CD4-positive, alpha-beta memory T cell (primary cell): ENCODE measurements at regions of chr2 and their contacts with region 1.

Region 1: GRCh38 chr2:31333527-31334183 is 80.9 kb downstream of the XDH start:
- DNase-seq: peak; percentile 71 to 76 (median 75)
- H3K4me3 ChIP-seq: no peak overlapping the region
- H3K4me3 Mint-ChIP-seq: no peak overlapping the region
- H3K27ac ChIP-seq: no peak overlapping the region
- H3K27ac Mint-ChIP-seq: peak overlapping the region in 2 of 7 donors; percentile 20 to 48
- H3K4me1 ChIP-seq: no peaks in the 10 kb centered on the region
- H3K4me1 Mint-ChIP-seq: no peaks in the 10 kb centered on the region
- H3K27me3 ChIP-seq: no peaks in the 10 kb centered on the region
- H3K27me3 Mint-ChIP-seq: peaks cover 1 to 3% of the 10 kb centered on the region in 2 donors

Region 2: GRCh38 chr2:30481323-30481800 is 852.3 kb before region 1 on chr2:
- CTCF ChIA-PET with region 1: no interaction called
- POLR2A ChIA-PET with region 1: no interaction called
- intact Hi-C with region 1: no loop called
- DNase-seq: no peak
- H3K4me3 ChIP-seq: no peak overlapping the region
- H3K4me3 Mint-ChIP-seq: no peak overlapping the region
- H3K27ac ChIP-seq: no peak overlapping the region
- H3K27ac Mint-ChIP-seq: peak overlapping the region in 2 of 7 donors; percentile 11 to 61
- H3K4me1 ChIP-seq: no peaks in the 10 kb centered on the region
- H3K4me1 Mint-ChIP-seq: peaks cover 8 to 13% (median 11%) of the 10 kb centered on the region in 4 donors
- H3K27me3 ChIP-seq: no peaks in the 10 kb centered on the region
- H3K27me3 Mint-ChIP-seq: no peaks in the 10 kb centered on the region

Region 3: GRCh38 chr2:30862054-30862651 is 471.5 kb before region 1 on chr2:
- CTCF ChIA-PET with region 1: interaction called, 66 read pairs
- POLR2A ChIA-PET with region 1: no interaction called
- intact Hi-C with region 1: no loop called
- DNase-seq: peak; percentile 32 to 51 (median 42)
- H3K4me3 ChIP-seq: no peak overlapping the region
- H3K4me3 Mint-ChIP-seq: no peak overlapping the region
- H3K27ac ChIP-seq: no peak overlapping the region
- H3K27ac Mint-ChIP-seq: no peak overlapping the region
- H3K4me1 ChIP-seq: no peaks in the 10 kb centered on the region
- H3K4me1 Mint-ChIP-seq: peaks cover 4 to 12% (median 6%) of the 10 kb centered on the region in 4 donors
- H3K27me3 ChIP-seq: no peaks in the 10 kb centered on the region
- H3K27me3 Mint-ChIP-seq: peaks cover 3 to 6% of the 10 kb centered on the region in 2 donors

Region 4: DNA sequence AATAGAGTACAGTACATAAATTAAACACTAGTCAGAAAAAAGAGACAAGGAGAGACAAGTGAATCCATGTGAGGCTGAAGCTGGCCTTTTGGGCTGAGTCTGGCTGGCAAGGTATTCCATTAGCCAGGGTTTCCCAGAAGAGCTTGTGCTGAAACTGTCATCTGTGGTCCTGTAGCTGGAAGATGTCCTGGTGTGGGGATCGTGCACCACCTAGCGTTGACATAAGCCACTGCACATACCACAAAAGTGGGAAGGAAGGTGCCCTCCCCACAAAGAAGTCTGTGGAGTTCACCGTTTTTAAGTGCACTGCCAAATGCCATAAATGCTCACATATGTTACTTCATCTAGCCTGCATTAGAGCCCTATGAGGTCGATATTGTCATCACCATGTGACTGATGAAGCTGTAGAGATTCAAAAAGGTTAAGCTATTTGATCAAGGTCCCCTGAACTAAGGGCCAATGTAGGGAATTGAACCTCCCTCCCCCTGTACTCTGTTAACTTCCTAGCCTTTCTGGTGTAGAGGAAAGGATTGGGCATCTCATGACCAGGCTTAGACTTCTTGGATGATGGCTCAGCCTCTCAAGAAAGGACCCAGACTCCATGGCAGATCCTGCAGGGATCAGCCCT is 163.5 kb before region 1 on chr2:
- CTCF ChIA-PET with region 1: interaction called, 32 read pairs
- POLR2A ChIA-PET with region 1: no interaction called
- intact Hi-C with region 1: loop called (anchors 1 kb)
- DNase-seq: peak in 4 of 5 donors; percentile 27 to 37 (median 30)
- H3K4me3 ChIP-seq: no peak overlapping the region
- H3K4me3 Mint-ChIP-seq: no peak overlapping the region
- H3K27ac ChIP-seq: no peak overlapping the region
- H3K27ac Mint-ChIP-seq: no peak overlapping the region
- H3K4me1 ChIP-seq: no peaks in the 10 kb centered on the region
- H3K4me1 Mint-ChIP-seq: peaks cover 0 to under 1% (median 0%) of the 10 kb centered on the region in 4 donors
- H3K27me3 ChIP-seq: no peaks in the 10 kb centered on the region
- H3K27me3 Mint-ChIP-seq: no peaks in the 10 kb centered on the region

Region 5: DNA sequence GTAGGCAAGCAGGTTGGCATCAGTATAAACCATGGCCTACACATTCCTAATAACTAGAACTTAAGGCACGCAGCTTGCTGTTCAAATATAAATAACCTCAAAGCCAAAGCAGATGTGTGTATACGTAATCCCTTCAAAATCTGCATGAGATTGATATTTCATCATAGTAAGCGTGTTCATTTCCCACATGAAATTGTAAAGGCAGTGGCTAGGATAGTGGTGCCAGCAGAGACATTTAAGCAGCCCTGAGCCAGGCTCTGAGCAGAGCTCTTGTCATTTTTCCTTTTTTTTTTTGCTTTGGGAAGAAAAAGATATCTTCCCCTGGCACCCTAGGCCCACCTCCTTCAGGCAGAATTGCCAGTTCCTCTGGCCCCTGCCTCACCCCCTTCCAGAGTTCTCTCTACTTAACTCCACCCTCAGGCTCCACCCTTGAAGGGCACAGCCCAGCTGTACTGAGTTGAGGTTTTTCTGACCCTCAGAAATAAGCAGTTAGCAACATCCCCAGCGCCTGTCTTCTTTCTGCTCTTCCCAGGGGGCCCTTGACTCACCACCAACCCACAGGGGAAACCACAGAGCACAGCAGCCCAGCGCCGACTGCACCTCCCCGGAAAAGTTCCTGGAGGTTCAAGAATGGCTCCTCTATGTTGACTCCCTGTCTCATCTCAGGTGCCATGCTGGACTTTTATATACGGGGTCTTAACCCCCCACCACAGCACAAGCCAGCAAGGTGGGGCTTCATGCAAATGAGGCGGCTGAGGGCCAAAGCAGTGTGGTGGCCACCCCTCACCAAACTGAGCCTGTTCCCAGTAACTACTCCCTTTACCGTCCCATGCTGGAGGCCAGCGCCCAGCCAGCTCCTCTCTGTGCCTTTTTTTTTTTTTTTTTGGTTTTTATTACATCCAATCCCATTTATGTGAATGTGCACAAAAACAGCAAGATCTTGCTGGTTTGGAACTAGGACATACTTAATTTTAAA is 15.0 kb before region 1 on chr2:
- CTCF ChIA-PET with region 1: interaction called, 33 read pairs
- POLR2A ChIA-PET with region 1: interaction called, 3 read pairs
- intact Hi-C with region 1: no loop called
- DNase-seq: peak in 2 of 5 donors; percentile 10 to 15
- H3K4me3 ChIP-seq: peak overlapping the region in 1 of 2 donors; percentile 6
- H3K4me3 Mint-ChIP-seq: peak overlapping the region in 7 of 8 donors; percentile 61 to 84 (median 75)
- H3K27ac ChIP-seq: peak overlapping the region; percentile 37
- H3K27ac Mint-ChIP-seq: peak overlapping the region; percentile 84 to 96 (median 91)
- H3K4me1 ChIP-seq: peaks cover 53% of the 10 kb centered on the region
- H3K4me1 Mint-ChIP-seq: peaks cover 46 to 69% (median 58%) of the 10 kb centered on the region in 4 donors
- H3K27me3 ChIP-seq: no peaks in the 10 kb centered on the region
- H3K27me3 Mint-ChIP-seq: no peaks in the 10 kb centered on the region

Region 6: GRCh38 chr2:31504311-31504710 is 170.7 kb after region 1 on chr2:
- CTCF ChIA-PET with region 1: no interaction called
- POLR2A ChIA-PET with region 1: no interaction called
- intact Hi-C with region 1: no loop called
- DNase-seq: no peak
- H3K4me3 ChIP-seq: no peak overlapping the region
- H3K4me3 Mint-ChIP-seq: no peak overlapping the region
- H3K27ac ChIP-seq: no peak overlapping the region
- H3K27ac Mint-ChIP-seq: no peak overlapping the region
- H3K4me1 ChIP-seq: no peaks in the 10 kb centered on the region
- H3K4me1 Mint-ChIP-seq: no peaks in the 10 kb centered on the region
- H3K27me3 ChIP-seq: no peaks in the 10 kb centered on the region
- H3K27me3 Mint-ChIP-seq: peaks cover 3 to 9% of the 10 kb centered on the region in 2 donors

Region 7: GRCh38 chr2:31675485-31675901 is 341.8 kb after region 1 on chr2:
- CTCF ChIA-PET with region 1: no interaction called
- POLR2A ChIA-PET with region 1: no interaction called
- intact Hi-C with region 1: no loop called
- DNase-seq: no peak
- H3K4me3 ChIP-seq: no peak overlapping the region
- H3K4me3 Mint-ChIP-seq: no peak overlapping the region
- H3K27ac ChIP-seq: no peak overlapping the region
- H3K27ac Mint-ChIP-seq: no peak overlapping the region
- H3K4me1 ChIP-seq: no peaks in the 10 kb centered on the region
- H3K4me1 Mint-ChIP-seq: no peaks in the 10 kb centered on the region
- H3K27me3 ChIP-seq: peaks cover 3% of the 10 kb centered on the region
- H3K27me3 Mint-ChIP-seq: peaks cover 2 to 3% of the 10 kb centered on the region in 2 donors